ENCODE measurements at regions of chr6 and their contacts with region 1.

Region 1: DNA sequence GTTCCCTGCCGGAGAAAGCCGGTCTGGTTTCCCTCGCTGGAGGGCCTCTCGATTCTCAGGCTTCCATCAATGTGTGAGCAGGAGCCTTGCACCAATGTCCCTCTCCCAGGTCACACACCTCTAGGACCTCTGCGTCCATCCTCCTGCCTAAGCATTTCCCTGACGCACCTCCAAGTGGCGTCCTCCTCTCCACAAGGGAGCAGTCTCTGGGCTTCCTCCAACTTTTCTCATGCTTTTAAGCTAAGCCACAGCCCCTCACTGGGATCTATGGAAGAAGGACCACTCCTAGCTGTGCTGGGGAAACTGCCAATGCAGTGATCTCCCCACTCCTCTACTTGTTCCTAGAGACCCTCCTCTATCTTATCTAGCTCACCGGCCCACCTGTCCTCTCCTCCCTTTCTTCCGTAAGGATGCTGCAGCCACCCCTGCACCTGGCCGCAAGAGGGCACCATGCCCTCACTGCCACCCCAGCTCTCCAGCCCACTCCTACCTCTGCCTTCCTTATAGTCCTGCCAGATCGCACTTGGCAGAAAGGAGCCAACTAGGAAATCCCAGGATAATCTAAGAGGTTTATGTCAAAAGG is 258.7 kb downstream of the LRFN2 start:
- DNase-seq: peak; percentile 42
- H3K4me3 ChIP-seq: no peak overlapping the region
- H3K27ac ChIP-seq: no peak overlapping the region
- H3K4me1 ChIP-seq: no peaks in the 10 kb centered on the region
- H3K27me3 ChIP-seq: no peaks in the 10 kb centered on the region
- CTCF ChIP-seq: peak; percentile 68

Region 2: GRCh38 chr6:40176152-40176551 is 152.3 kb before region 1 on chr6:
- intact Hi-C with region 1: no loop called
- DNase-seq: no peak
- H3K4me3 ChIP-seq: no peak overlapping the region
- H3K27ac ChIP-seq: no peak overlapping the region
- H3K4me1 ChIP-seq: no peaks in the 10 kb centered on the region
- H3K27me3 ChIP-seq: no peaks in the 10 kb centered on the region
- CTCF ChIP-seq: no peak

Region 3: GRCh38 chr6:40587240-40588069 is 259.0 kb after region 1 on chr6 and contains the start of gene LRFN2:
- intact Hi-C with region 1: loop called (anchors 5 kb)
- DNase-seq: peak; percentile 75
- H3K4me3 ChIP-seq: peak within 1 kb of the TSS; percentile 36
- H3K27ac ChIP-seq: no peak within 1 kb of the TSS
- H3K4me1 ChIP-seq: no peaks in the 10 kb centered on the region
- H3K27me3 ChIP-seq: peaks cover 6% of the 10 kb centered on the region
- CTCF ChIP-seq: peak; percentile 53
- total RNA-seq, gene LRFN2: 0.21 to 0.22 TPM

Region 4: GRCh38 chr6:40845553-40845952 is 517.1 kb after region 1 on chr6:
- intact Hi-C with region 1: loop called (anchors 5 kb)
- DNase-seq: peak; percentile 40
- H3K4me3 ChIP-seq: no peak overlapping the region
- H3K27ac ChIP-seq: no peak overlapping the region
- H3K4me1 ChIP-seq: no peaks in the 10 kb centered on the region
- H3K27me3 ChIP-seq: no peaks in the 10 kb centered on the region
- CTCF ChIP-seq: peak; percentile 23

Measured in colonic mucosa (tissue), 4 donors.